Activated CD8-positive, alpha-beta T cell treated with anti-CD3 and anti-CD28 coated beads for 36 hours (primary cell): ENCODE measurements at regions of chr16 and their contacts with region 1.

Region 1: GRCh38 chr16:57618306-57619127 is 9.9 kb upstream of the ADGRG1 start:
- DNase-seq: no peak
- ATAC-seq: no peak
- H3K4me3 Mint-ChIP-seq: no peak overlapping the region
- H3K27ac Mint-ChIP-seq: peak overlapping the region; percentile 77
- H3K4me1 Mint-ChIP-seq: peaks cover 33% of the 10 kb centered on the region
- H3K27me3 Mint-ChIP-seq: no peaks in the 10 kb centered on the region
- CTCF ChIP-seq: no peak

Region 2: GRCh38 chr16:57555831-57556230 is 62.7 kb before region 1 on chr16:
- CTCF ChIA-PET with region 1: no interaction called
- POLR2A ChIA-PET with region 1: no interaction called
- intact Hi-C with region 1: no loop called
- DNase-seq: no peak
- ATAC-seq: peak; percentile 45
- H3K4me3 Mint-ChIP-seq: no peak overlapping the region
- H3K27ac Mint-ChIP-seq: no peak overlapping the region
- H3K4me1 Mint-ChIP-seq: peaks cover 17% of the 10 kb centered on the region
- H3K27me3 Mint-ChIP-seq: no peaks in the 10 kb centered on the region
- CTCF ChIP-seq: no peak

Region 3: DNA sequence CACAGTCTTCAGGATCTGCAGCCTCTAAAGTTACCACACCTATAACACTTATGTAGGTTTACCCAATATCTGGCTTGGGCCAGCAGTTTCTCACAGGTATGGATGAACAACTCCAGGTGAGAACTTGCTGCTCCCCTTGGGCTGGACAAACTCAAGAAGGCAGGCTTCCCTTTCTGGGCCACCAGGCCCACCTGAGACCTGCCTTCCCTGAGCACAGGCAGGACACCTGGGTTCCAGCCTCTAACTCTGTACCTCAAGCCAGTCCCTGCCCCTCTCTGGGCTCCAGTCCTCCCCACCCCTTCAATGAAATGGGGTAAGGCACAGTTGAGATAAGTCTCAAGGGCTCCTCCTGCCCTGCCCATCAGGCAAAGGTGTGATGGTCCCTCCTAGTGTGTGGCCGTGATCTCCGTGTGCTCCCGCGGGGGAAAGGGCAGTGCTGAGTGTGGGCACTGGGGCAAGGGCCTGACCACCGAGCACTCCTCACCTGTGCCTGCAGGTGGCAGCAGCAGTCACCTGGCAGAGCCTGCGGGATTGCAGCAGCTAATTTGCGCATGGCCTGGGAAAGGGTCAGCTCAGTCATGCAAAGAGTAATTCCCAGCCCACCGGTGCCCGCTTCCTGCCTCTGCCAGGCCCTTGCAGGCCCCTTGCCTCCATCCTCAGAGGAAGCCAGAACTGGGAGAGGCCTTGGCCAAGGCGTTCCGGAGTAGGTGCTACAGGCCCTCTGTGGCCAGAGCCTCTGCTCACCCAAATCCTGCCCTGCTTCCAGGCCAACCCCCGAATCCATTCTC is 18.3 kb before region 1 on chr16:
- CTCF ChIA-PET with region 1: interaction called, 16 read pairs
- POLR2A ChIA-PET with region 1: interaction called, 8 read pairs
- intact Hi-C with region 1: no loop called
- DNase-seq: peak; percentile 61
- ATAC-seq: peak; percentile 19
- H3K4me3 Mint-ChIP-seq: no peak overlapping the region
- H3K27ac Mint-ChIP-seq: peak overlapping the region; percentile 71
- H3K4me1 Mint-ChIP-seq: peaks cover 57% of the 10 kb centered on the region
- H3K27me3 Mint-ChIP-seq: no peaks in the 10 kb centered on the region
- CTCF ChIP-seq: peak; percentile 81